Activated CD8-positive, alpha-beta memory T cell treated with anti-CD3 and anti-CD28 coated beads, Interleukin-2, amount 10 ng/mL, durations not matched to agents 7 days and 5 days (primary cell): ENCODE measurements at regions of chr15 and their contacts with region 1.

Region 1: DNA sequence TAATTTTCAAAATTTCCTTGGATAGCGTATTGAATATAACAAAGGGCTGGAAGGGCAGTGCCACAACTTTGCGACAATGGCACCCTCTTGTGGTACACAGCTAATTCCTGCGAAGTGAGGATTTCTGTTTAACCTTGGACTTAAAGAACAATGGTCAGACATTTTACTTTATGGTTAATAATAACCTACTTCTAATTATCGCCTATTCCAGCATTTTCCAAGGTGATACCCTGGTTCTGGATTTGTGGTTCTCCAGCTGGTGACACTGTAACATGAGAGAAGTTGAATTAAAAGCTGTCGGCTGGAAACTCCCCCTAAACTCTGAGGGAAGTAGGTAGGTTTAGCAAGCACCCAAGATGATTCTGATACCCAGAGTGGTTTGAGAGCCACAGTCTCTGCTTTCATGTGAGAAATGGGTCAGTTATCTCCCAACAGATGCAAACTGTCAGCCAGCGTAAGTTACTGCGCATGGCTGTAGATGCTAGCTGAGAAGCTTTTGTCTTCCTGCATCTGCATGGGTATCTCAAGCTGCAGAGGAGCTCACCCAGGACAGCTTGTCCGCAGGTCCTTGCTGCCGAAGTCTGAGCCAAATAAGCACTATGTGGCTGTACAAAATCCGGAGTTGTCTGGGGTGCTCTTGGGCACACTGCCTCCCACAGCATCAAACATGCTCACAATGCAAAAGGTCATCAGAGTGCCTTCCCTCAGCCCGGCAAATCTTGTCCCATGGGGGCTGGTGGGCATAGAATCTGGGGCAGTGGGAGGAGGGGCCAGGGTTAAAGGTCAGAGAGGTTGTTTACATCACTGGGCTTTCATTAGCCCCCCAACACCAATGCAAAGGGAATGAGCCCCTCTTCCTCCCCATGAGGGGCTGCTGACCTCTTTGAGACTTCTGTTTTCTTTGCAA is 6.6 kb upstream of the CHSY1 start:
- DNase-seq: peak; percentile 69
- ATAC-seq: peak; percentile 71
- H3K4me3 Mint-ChIP-seq: no peak overlapping the region
- H3K27ac Mint-ChIP-seq: no peak overlapping the region
- H3K4me1 Mint-ChIP-seq: peaks cover 34% of the 10 kb centered on the region
- H3K27me3 Mint-ChIP-seq: peaks cover 21% of the 10 kb centered on the region

Region 2: DNA sequence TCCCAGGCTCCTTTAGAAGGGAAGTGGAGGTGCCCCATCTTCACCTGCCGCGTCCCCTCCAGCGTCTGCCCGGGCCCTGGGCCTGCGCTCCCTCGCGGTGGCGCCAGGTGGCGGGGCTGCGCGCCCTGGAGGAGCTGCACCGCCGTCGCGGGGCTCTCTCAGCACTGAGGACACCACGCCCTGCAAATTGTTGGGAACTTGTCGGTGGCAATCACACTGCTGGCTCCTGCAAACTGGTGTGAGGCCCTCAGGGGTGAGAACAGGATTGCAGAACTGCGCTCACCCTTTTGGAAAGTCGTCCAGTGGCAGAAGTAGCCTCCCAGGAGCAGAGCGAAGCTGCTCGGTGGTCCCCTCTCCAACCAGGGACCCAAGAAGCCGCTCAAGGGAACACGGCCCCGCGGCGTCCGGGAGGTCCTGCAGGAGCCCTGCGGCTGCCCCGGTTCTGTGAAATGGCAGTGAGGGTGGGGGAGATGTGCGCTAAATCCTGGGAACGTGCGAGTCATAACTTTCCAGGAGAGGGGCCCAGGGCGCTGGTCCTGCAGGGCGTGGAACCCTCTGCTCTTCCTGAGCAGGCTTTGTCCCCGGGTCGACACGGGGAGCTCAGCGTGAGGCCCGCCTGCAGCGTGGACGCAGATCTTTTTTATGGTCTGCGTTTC is 340.3 kb before region 1 on chr15:
- CTCF ChIA-PET with region 1: interaction called, 12 read pairs
- DNase-seq: peak; percentile 78
- ATAC-seq: peak; percentile 94
- H3K4me3 Mint-ChIP-seq: peak overlapping the region; percentile 64
- H3K27ac Mint-ChIP-seq: no peak overlapping the region
- H3K4me1 Mint-ChIP-seq: peaks cover 26% of the 10 kb centered on the region
- H3K27me3 Mint-ChIP-seq: peaks cover 83% of the 10 kb centered on the region

Region 3: DNA sequence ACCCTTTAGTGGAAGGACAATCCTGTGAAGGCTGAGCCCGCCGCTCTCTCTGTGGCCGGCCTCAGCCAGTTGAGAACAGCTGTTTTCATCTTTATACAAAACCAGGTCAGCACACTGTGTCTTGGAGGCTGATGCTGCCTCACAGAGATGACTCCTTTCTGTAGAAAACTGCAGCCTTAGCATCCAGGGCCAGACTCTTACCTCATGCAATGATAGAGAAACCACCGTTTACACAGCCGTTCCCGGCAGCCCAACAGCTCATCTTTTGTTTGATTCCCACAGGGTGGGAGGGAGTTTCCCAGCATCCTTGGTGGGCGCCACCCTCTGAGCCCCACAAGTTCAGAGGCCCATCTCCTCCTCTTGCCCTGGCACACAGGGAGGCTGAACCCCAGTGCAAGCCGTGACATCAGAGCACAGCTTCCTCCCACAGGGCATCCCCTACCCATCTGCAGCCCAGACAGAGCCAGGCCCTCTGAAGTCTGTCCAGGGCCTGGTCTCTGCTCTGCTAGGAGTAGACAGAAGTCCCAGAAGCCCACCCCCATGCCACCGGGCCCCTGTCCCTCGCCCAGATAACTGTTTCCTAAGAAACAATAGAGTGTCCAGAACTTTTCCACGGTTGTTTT is 234.3 kb before region 1 on chr15:
- CTCF ChIA-PET with region 1: interaction called, 48 read pairs
- DNase-seq: peak; percentile 25
- ATAC-seq: no peak
- H3K4me3 Mint-ChIP-seq: no peak overlapping the region
- H3K27ac Mint-ChIP-seq: no peak overlapping the region
- H3K4me1 Mint-ChIP-seq: no peaks in the 10 kb centered on the region
- H3K27me3 Mint-ChIP-seq: peaks cover 2% of the 10 kb centered on the region

Region 4: GRCh38 chr15:101099183-101099582 is 159.3 kb before region 1 on chr15:
- CTCF ChIA-PET with region 1: interaction called, 244 read pairs
- DNase-seq: peak; percentile 81
- ATAC-seq: peak; percentile 89
- H3K4me3 Mint-ChIP-seq: no peak overlapping the region
- H3K27ac Mint-ChIP-seq: peak overlapping the region; percentile 66
- H3K4me1 Mint-ChIP-seq: peaks cover 20% of the 10 kb centered on the region
- H3K27me3 Mint-ChIP-seq: peaks cover 17% of the 10 kb centered on the region

Region 5: GRCh38 chr15:101232677-101233076 is 25.8 kb before region 1 on chr15:
- CTCF ChIA-PET with region 1: no interaction called
- DNase-seq: no peak
- ATAC-seq: no peak
- H3K4me3 Mint-ChIP-seq: no peak overlapping the region
- H3K27ac Mint-ChIP-seq: no peak overlapping the region
- H3K4me1 Mint-ChIP-seq: peaks cover 50% of the 10 kb centered on the region
- H3K27me3 Mint-ChIP-seq: no peaks in the 10 kb centered on the region

Region 6: GRCh38 chr15:101277038-101277882 is 18.8 kb after region 1 on chr15 and contains the start of gene SELENOS:
- CTCF ChIA-PET with region 1: interaction called, 16 read pairs
- DNase-seq: peak; percentile 88
- ATAC-seq: peak; percentile 93
- H3K4me3 Mint-ChIP-seq: peak within 1 kb of the TSS; percentile 100
- H3K27ac Mint-ChIP-seq: peak within 1 kb of the TSS; percentile 99
- H3K4me1 Mint-ChIP-seq: peaks cover 30% of the 10 kb centered on the region
- H3K27me3 Mint-ChIP-seq: no peaks in the 10 kb centered on the region
- total RNA-seq, gene SELENOS: 33.1 to 49.0 TPM